GM12878 (cell line): ENCODE measurements at regions of chr10 and their contacts with region 1.

Region 1: GRCh38 chr10:89369156-89370105 is 8.4 kb upstream of the IFIT1B start:
- DNase-seq: no peak
- ATAC-seq: peak; percentile 57
- H3K4me3 ChIP-seq: no peak overlapping the region
- H3K27ac ChIP-seq: peak overlapping the region; percentile 10; the same call in 1 of the 2 replicates
- H3K4me1 ChIP-seq: peaks cover 25% of the 10 kb centered on the region
- H3K27me3 ChIP-seq: no peaks in the 10 kb centered on the region
- CTCF ChIP-seq: peak; percentile 48 to 66 (median 53); a peak in 5 of 6 replicates
- EP300 ChIP-seq: no peak
- POLR2A ChIP-seq: no peak
- RAD21 ChIP-seq: peak; percentile 76

Region 2: DNA sequence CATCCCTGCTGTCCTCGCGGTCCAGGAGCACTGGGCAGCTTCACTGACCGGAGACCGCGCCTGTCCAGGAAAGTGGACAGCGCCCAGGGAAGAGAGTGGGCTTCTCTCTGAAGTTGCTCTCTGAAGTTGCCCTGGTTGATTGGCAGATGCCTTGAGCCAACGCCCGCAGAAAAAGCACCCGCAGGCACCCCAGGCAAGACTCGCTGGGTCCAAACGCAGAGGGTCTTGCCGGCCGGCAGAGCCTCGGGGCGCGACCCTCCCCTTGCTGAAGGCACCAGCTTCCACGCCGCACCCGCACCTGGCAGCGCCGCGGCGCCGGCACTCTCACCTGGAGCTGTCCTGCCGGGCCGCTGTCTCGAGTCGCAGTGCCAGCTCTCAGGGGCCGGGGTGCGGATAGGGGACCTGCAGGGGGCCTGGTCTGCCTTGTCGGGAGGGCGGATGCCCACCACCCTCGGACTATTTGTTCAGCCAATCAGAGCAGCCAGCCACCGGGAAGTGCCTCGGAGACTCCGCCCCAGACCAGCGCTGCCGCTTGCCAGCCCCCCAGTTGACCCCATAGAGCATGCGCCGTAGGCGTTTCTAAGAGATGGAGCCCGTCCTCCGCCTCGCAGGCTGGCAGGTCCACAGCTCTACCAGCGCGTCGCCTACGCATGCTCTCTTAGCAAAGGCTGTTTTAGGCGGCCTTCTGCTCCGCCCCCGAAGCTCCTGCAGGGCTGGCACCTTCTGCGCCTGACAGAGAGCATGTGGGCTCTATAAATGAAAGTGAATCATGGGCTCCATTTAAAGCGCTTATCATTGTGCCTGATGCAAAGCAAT is 117.8 kb before region 1 on chr10 and contains the start of gene LIPA:
- CTCF ChIA-PET with region 1: interaction called, 13 read pairs
- POLR2A ChIA-PET with region 1: interaction called, 10 read pairs
- RAD21 ChIA-PET with region 1: interaction called, 30 read pairs
- SMC1A ChIA-PET with region 1: interaction called, 25 read pairs
- in situ Hi-C with region 1: no loop called
- intact Hi-C with region 1: no loop called
- DNase-seq: peak; percentile 95
- ATAC-seq: peak; percentile 97
- H3K4me3 ChIP-seq: peak within 1 kb of the TSS; percentile 84
- H3K27ac ChIP-seq: peak within 1 kb of the TSS; percentile 69
- H3K4me1 ChIP-seq: 0 out of 2 replicates have a peak, but pooled peaks cover 6% of the 10 kb centered on the region
- H3K27me3 ChIP-seq: no peaks in the 10 kb centered on the region
- CTCF ChIP-seq: no peak
- EP300 ChIP-seq: no peak
- POLR2A ChIP-seq: peak; percentile 84
- RAD21 ChIP-seq: no peak
- polyA plus RNA-seq, gene LIPA: 36.0 to 45.2 TPM

Region 3: GRCh38 chr10:89296220-89296648 is 73.2 kb before region 1 on chr10:
- CTCF ChIA-PET with region 1: interaction called, 95 read pairs
- POLR2A ChIA-PET with region 1: interaction called, 5 read pairs
- RAD21 ChIA-PET with region 1: interaction called, 68 read pairs
- SMC1A ChIA-PET with region 1: interaction called, 98 read pairs
- in situ Hi-C with region 1: no loop called
- intact Hi-C with region 1: loop called (anchors 1 kb)
- DNase-seq: no peak
- ATAC-seq: peak; percentile 75
- H3K4me3 ChIP-seq: peak overlapping the region; percentile 18; the same call in 1 of the 2 replicates
- H3K27ac ChIP-seq: no peak overlapping the region
- H3K4me1 ChIP-seq: peaks cover 15% of the 10 kb centered on the region; the same call in 1 of the 2 replicates
- H3K27me3 ChIP-seq: no peaks in the 10 kb centered on the region
- CTCF ChIP-seq: no peak
- EP300 ChIP-seq: no peak
- POLR2A ChIP-seq: no peak
- RAD21 ChIP-seq: no peak

Region 4: GRCh38 chr10:89327784-89328441 is 41.5 kb before region 1 on chr10 and contains the start of gene IFIT3:
- CTCF ChIA-PET with region 1: interaction called, 17 read pairs
- POLR2A ChIA-PET with region 1: interaction called, 5 read pairs
- RAD21 ChIA-PET with region 1: interaction called, 18 read pairs
- SMC1A ChIA-PET with region 1: interaction called, 4 read pairs
- in situ Hi-C with region 1: no loop called
- intact Hi-C with region 1: no loop called
- DNase-seq: peak; percentile 62
- ATAC-seq: peak; percentile 33
- H3K4me3 ChIP-seq: peak within 1 kb of the TSS; percentile 51
- H3K27ac ChIP-seq: peak within 1 kb of the TSS; percentile 60
- H3K4me1 ChIP-seq: peaks cover 22% of the 10 kb centered on the region
- H3K27me3 ChIP-seq: no peaks in the 10 kb centered on the region
- CTCF ChIP-seq: no peak
- EP300 ChIP-seq: no peak
- POLR2A ChIP-seq: peak; percentile 63
- RAD21 ChIP-seq: no peak
- polyA plus RNA-seq, gene IFIT3: 27.0 to 50.4 TPM

Region 5: DNA sequence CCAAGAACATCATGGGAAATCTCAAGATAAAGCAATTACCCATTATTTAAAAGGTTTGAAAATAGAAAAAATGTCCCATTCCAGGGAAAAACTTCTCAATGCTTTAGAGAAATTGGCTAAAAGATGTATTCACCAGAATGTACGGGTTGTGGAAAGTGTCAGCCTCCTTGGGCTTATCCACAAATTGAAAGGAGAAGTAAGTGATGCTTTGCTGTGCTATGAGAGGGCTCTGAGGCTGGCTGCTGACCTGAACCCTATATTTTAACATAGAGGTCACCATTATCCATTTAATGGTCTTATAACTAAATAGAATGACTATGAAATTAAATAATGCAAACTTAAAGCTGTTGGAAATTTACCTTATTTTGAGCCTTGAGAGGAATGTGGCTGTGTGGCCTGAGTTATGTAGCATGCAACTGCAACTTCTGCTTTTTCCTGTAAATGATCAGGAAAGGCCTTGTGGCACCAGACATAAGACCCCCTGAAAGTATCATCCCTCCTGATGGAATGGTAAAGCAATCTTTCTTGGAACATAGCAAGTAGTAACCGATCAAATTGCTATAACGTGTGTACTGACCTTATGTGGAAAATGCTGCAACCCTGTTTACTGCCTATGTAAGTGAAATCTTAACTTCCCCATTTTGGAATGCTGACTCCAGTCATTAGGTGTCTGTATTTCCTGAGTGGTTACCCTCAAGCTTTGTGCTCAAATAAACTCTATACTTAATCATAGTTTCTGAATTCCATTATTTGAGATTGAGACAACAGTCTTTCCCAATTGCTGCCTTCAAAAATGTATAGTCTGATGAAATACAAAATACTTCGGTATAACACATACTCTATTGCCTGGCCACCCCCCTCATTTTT is 15.3 kb after region 1 on chr10:
- CTCF ChIA-PET with region 1: interaction called, 97 read pairs
- POLR2A ChIA-PET with region 1: interaction called, 4 read pairs
- RAD21 ChIA-PET with region 1: interaction called, 13 read pairs
- SMC1A ChIA-PET with region 1: interaction called, 32 read pairs
- in situ Hi-C with region 1: no loop called
- intact Hi-C with region 1: no loop called
- DNase-seq: no peak
- ATAC-seq: peak; percentile 40
- H3K4me3 ChIP-seq: no peak overlapping the region
- H3K27ac ChIP-seq: no peak overlapping the region
- H3K4me1 ChIP-seq: peaks cover 3% of the 10 kb centered on the region; the same call in 1 of the 2 replicates
- H3K27me3 ChIP-seq: no peaks in the 10 kb centered on the region
- CTCF ChIP-seq: no peak
- EP300 ChIP-seq: no peak
- POLR2A ChIP-seq: no peak
- RAD21 ChIP-seq: no peak

Region 6: GRCh38 chr10:89419548-89419947 is 50.1 kb after region 1 on chr10:
- CTCF ChIA-PET with region 1: interaction called, 24 read pairs
- POLR2A ChIA-PET with region 1: interaction called, 5 read pairs
- RAD21 ChIA-PET with region 1: interaction called, 20 read pairs
- SMC1A ChIA-PET with region 1: interaction called, 32 read pairs
- in situ Hi-C with region 1: no loop called
- intact Hi-C with region 1: no loop called
- DNase-seq: no peak
- ATAC-seq: no peak
- H3K4me3 ChIP-seq: peak overlapping the region; percentile 61
- H3K27ac ChIP-seq: no peak overlapping the region
- H3K4me1 ChIP-seq: no peaks in the 10 kb centered on the region
- H3K27me3 ChIP-seq: no peaks in the 10 kb centered on the region
- CTCF ChIP-seq: peak; percentile 47 to 57 (median 49)
- EP300 ChIP-seq: no peak
- POLR2A ChIP-seq: no peak
- RAD21 ChIP-seq: peak; percentile 27; the same call in 1 of the 2 replicates

Region 7: DNA sequence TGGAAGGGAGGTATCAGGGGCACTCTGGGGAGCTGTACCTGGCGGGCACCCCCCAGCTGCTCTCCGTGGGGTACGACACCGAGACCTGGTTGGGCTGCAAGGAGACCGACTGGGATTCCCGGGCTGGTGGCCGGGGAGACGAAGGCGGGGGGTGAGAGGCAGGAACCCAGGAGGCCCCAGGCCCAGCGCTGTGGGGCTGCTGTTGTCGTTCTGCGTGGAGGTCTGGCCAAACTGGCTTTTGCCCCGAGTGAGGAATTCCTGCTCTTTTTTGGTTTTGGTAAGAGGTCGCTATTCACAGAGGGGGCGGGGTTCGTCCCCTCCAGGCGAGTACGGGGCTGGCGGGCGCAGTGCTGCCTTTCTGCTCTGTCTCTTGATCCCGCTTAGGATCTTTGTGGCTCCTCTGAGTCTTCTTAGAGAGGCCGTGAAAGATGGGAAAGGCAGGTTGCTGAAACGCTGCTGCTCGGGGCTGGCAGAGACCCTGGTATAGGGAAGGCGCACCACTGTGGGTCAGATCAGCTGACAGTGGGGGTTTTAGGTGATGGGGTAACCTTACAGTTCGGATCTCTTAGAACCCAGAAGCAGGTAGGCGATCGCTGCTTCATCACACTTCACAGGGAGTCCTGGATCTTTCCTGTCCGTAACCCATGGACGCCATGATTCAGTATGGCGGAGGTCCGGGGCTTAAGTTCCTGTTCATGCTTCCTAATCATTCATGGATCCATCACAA is 468.6 kb after region 1 on chr10:
- CTCF ChIA-PET with region 1: no interaction called
- POLR2A ChIA-PET with region 1: no interaction called
- RAD21 ChIA-PET with region 1: no interaction called
- SMC1A ChIA-PET with region 1: no interaction called
- in situ Hi-C with region 1: no loop called
- intact Hi-C with region 1: no loop called
- DNase-seq: no peak
- ATAC-seq: no peak
- H3K4me3 ChIP-seq: peak overlapping the region; percentile 59
- H3K27ac ChIP-seq: no peak overlapping the region
- H3K4me1 ChIP-seq: peaks cover 5% of the 10 kb centered on the region; the same call in 1 of the 2 replicates
- H3K27me3 ChIP-seq: peaks cover 2 to 21% of the 10 kb centered on the region in 2 experiments; a peak in 3 of 4 replicates
- CTCF ChIP-seq: no peak
- EP300 ChIP-seq: no peak
- POLR2A ChIP-seq: no peak
- RAD21 ChIP-seq: no peak